Left colon (tissue), 2 donors: ENCODE measurements at regions of chr1 and their contacts with region 1.

Region 1: DNA sequence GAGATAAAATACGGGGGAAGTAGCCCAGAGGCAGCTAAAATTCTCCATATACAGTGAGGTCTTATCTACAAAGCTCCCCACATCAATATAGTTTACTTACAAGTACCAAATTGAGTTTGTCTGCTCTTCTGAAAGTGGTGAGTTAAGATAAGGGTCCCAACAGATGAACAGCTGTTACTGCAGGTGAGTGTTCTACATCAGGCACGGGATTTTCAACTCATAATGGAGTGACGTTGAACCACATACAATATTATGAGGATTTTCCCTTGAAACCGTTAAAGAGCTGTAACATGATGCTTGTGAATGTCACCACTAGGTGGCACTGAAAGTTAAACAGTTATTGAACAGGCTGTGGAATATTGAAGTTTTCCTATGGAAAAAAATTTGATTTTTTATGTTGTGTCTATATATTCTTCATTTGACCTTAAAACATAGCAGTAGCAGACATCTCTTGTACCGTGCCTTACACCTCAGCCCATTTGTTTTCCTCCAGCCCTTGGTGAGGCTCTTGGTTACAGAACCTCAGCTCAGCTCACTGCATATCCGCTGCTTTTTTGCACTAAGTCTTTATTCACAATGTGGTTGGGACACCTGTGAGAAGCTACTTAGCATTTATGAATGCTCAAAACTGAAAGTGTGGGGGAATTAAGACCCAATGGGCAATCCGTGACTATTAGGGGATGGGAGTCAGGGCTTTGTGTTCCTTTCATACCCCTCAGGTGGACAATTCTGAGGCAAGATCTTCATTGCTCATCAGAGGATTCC is 23.2 kb downstream of the CD1D start:
- DNase-seq: no peak
- ATAC-seq: peak; percentile 71

Region 2: GRCh38 chr1:158117854-158118704 is 85.8 kb before region 1 on chr1:
- intact Hi-C with region 1: no loop called
- DNase-seq: peak in 1 of 2 donors; percentile 49
- ATAC-seq: peak; percentile 53

Region 3: DNA sequence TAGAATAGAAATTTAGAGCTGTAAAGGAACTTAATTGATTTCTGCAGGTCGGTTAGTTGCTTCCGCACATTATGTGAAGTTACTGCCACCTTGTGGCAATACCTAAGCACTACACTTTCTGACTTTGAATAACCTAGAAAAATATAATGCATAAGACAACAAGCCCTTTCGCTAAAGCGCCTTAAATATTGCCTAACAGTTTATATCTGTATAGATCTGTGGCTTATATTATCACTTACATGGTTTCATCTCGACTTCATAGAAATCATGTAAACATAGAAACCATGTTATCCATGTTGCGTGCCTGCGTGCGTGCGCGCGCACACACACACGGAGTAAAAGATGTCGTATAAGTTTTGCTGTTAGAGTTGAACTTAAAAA is 794.9 kb after region 1 on chr1:
- intact Hi-C with region 1: loop called in 1 of 2 experiments (anchors 5 kb)
- DNase-seq: peak in 1 of 2 donors; percentile 45
- ATAC-seq: peak; percentile 66

Region 4: DNA sequence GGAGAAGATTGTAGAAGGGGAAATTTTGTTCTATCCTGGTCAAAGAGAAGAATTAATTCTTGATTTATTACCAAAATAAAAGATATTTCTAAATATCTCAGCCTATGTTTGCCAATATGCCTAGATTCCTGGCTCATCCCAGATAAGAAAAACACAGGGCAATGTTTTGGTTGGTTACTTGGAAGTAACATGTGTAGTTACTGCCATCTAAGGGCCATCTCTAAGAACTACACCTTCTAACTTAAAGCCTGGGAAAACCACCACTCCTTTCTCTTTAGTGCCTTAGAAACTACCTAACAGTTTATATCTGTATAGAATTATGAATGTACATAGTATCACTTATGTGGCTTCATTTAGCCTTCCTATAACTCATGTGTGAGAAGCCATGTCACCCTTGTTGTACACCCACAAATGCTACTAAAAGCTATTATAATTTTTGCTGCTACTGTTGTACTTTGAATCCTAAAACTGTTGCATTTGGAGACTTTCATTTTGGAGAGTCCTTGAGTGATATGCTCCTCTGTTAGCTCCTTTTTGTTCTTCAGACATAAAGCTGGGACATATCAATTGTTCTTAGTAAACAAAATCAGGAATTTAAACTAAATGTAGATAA is 868.2 kb after region 1 on chr1:
- intact Hi-C with region 1: loop called in 1 of 2 experiments (anchors 5 kb)
- DNase-seq: no peak
- ATAC-seq: peak; percentile 65